ENCODE measurements at regions of chr5 and their contacts with region 1.

Region 1: GRCh38 chr5:109865637-109866036 is 175.9 kb downstream of the MAN2A1 start:
- DNase-seq: no peak
- ATAC-seq: no peak
- H3K4me3 ChIP-seq: no peak overlapping the region
- H3K4me3 Mint-ChIP-seq: no peak overlapping the region
- H3K27ac ChIP-seq: no peak overlapping the region
- H3K27ac Mint-ChIP-seq: peak overlapping the region; percentile 66
- H3K4me1 ChIP-seq: peaks cover 57% of the 10 kb centered on the region
- H3K4me1 Mint-ChIP-seq: peaks cover 80% of the 10 kb centered on the region
- H3K27me3 ChIP-seq: no peaks in the 10 kb centered on the region
- H3K27me3 Mint-ChIP-seq: no peaks in the 10 kb centered on the region
- CTCF ChIP-seq: no peak

Region 2: GRCh38 chr5:109844148-109844547 is 21.5 kb before region 1 on chr5:
- CTCF ChIA-PET with region 1: no interaction called
- POLR2A ChIA-PET with region 1: no interaction called
- intact Hi-C with region 1: loop called in 1 of 2 experiments (anchors 2 kb)
- DNase-seq: no peak
- ATAC-seq: no peak
- H3K4me3 ChIP-seq: no peak overlapping the region
- H3K4me3 Mint-ChIP-seq: no peak overlapping the region
- H3K27ac ChIP-seq: no peak overlapping the region
- H3K27ac Mint-ChIP-seq: no peak overlapping the region
- H3K4me1 ChIP-seq: peaks cover 27% of the 10 kb centered on the region
- H3K4me1 Mint-ChIP-seq: peaks cover 37% of the 10 kb centered on the region
- H3K27me3 ChIP-seq: no peaks in the 10 kb centered on the region
- H3K27me3 Mint-ChIP-seq: no peaks in the 10 kb centered on the region
- CTCF ChIP-seq: no peak

Region 3: DNA sequence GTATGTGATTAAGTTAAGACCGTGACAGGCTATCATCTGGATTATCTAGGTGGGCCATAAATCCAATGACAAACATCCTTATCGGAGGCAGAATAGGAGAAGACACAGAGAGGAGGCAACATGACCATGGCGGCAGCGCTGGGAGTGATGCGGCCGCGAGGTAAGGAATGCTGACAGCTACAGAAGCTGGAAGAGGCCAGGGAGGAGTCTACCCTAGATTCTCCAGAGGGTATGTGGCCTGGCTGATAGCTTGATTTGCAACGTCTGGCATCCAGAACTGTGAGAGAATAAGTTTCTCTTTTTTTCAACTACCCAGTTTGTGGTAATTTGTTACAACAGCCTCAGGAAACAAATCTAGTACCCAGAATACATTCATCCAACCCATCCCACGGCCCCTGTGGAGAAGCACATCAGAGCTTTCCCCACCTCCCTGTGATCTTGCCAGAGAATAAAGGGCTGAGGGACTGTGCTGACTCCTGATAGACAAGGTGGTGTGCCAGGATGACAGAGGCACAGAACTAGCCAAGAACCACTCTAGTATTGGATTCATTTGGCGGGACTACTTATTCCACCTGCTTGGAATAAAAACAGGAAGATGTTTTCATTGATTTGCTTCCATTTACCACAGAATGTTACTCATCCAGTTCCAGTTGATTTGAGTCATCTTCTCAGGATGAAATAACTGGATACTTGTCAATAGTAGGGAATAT is 11.5 kb after region 1 on chr5:
- CTCF ChIA-PET with region 1: interaction called, 3 read pairs
- POLR2A ChIA-PET with region 1: interaction called, 3 read pairs
- intact Hi-C with region 1: loop called in 1 of 2 experiments (anchors 2 kb)
- DNase-seq: no peak
- ATAC-seq: no peak
- H3K4me3 ChIP-seq: no peak overlapping the region
- H3K4me3 Mint-ChIP-seq: no peak overlapping the region
- H3K27ac ChIP-seq: no peak overlapping the region
- H3K27ac Mint-ChIP-seq: no peak overlapping the region
- H3K4me1 ChIP-seq: peaks cover 31% of the 10 kb centered on the region
- H3K4me1 Mint-ChIP-seq: peaks cover 44% of the 10 kb centered on the region
- H3K27me3 ChIP-seq: no peaks in the 10 kb centered on the region
- H3K27me3 Mint-ChIP-seq: no peaks in the 10 kb centered on the region
- CTCF ChIP-seq: no peak